ENCODE measurements at regions of chr2 and their contacts with region 1.

Region 1: DNA sequence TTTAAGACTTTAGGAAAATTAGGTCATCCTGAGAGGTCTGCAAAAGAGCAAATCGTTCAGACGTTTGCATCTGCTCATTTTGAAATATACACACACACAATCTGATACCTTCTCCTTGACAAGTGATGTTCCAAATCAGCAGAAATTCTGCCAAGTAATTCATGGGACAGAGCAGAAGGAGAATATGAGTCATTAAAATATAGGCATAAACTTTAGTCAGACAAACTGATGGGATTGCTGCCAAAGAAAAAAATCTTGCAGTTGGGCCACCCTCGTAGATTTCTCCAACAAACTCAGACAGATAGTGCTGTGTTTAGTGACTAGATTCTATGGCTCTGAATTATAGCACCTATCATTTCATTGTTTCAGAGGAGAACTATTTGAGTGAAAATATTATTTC is 336.3 kb downstream of the NYAP2 start:
- DNase-seq: no peak
- ATAC-seq: no peak
- H3K4me3 ChIP-seq: no peak overlapping the region
- H3K27ac ChIP-seq: no peak overlapping the region
- H3K4me1 ChIP-seq: no peaks in the 10 kb centered on the region
- H3K27me3 ChIP-seq: 0 out of 5 replicates have a peak, but pooled peaks cover 0 to 3% of the 10 kb centered on the region in 2 experiments
- CTCF ChIP-seq: no peak
- EP300 ChIP-seq: no peak
- POLR2A ChIP-seq: no peak
- RAD21 ChIP-seq: no peak

Region 2: DNA sequence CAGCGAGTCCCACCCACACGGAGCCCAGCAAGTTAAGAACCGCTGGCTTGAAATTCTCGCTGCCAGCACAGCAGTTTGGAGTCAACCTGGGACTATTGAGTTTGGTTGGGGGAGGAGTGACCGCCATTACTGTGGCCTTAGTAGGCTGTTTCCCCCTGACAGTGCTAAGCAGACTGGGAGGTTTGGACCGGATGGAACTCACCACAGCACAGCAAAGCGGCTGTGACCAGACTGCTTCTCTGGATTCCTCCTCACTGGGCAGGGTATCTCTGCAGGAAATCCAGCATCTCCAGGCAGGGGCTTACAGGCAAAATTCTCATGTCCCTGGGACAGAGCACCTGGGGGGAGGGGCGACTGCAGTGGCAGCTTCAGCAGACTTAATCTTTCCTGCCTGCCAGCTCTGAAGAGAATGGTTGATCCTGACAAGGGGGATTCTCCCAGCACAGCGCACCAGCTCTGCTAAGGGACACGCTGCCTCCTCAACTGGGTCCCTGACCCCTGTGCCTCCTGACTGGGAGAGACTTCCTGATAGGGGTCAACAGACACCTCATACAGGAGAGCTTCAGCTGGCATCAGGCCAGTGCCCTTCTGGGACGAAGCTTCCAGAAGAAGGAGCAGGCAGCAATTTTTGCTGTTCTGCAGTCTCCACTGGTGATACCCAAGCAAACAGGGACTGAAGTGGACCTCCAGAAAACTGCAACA is 89.1 kb after region 1 on chr2:
- CTCF ChIA-PET with region 1: no interaction called
- POLR2A ChIA-PET with region 1: no interaction called
- in situ Hi-C with region 1: no loop called
- intact Hi-C with region 1: loop called (anchors 5 kb)
- DNase-seq: no peak
- ATAC-seq: peak; percentile 63
- H3K4me3 ChIP-seq: no peak overlapping the region
- H3K27ac ChIP-seq: no peak overlapping the region
- H3K4me1 ChIP-seq: no peaks in the 10 kb centered on the region
- H3K27me3 ChIP-seq: no peaks in the 10 kb centered on the region
- CTCF ChIP-seq: no peak
- EP300 ChIP-seq: no peak
- POLR2A ChIP-seq: no peak
- RAD21 ChIP-seq: no peak

Measured in HepG2 (cell line).